Posterior vena cava (tissue), 2 donors: ENCODE measurements at regions of chr14 and their contacts with region 1.

Region 1: DNA sequence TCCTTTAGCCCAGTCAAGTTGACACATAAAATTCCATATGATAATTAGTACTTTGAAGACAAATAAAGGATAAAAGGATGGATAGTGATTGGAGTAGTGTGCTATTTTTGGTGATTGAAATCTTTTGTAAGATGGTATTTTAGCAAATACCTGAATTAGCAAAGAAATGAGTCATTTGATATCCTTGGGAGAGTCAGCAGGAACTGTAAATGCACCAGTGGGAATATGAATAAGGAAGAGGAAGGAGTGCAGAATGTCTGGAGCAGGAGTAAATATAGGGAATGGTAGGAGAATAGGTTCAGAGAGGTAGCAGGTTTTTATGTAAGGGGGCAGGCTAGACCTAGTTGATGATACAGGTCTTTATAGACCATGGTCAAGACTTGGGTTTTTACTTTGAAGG is 75.0 kb downstream of the TRMT5 start:
- DNase-seq: no peak

Region 2: GRCh38 chr14:60815371-60815770 is 90.6 kb before region 1 on chr14:
- intact Hi-C with region 1: no loop called
- DNase-seq: no peak

Region 3: GRCh38 chr14:60926002-60926401 is 20.1 kb after region 1 on chr14:
- intact Hi-C with region 1: loop called in 1 of 2 experiments (anchors 2 kb)
- DNase-seq: no peak